Transverse colon (tissue), 4 donors: ENCODE measurements at regions of chr3 and their contacts with region 1.

Region 1: DNA sequence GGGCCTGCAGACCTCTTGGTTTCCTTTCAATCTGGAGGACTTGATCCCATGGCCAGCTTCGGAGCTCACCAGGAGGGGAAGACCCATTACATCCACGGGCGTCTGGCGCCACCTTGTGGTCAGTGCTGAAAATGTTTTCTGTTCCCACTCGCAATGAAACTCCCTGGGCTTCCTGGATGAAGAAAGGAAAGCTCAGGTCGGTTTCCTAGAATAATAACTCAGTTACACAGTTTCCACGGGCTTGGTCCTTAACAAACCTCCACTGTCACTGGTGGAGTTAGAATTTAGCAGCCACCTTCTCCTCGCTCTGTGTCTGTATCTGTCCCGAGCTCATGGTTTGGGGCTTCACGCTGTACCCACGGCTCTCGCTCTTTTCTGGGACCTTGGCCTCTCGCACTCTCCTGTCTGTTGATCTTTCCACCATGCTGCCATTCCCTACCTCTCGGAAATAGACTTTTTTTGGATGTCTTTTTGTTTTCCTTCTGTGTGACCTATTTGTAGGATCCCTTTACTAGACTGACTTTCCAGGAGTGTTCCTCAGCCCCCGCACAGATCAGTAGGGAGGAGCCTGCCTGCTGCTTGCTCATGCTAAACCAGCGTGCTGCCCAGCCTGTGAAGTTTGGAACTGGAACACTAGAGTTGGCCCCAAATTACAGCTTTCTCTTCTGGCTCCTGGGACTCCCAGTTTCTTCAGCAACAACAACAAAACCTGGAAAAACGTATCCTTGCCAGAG is 56.3 kb downstream of the IL20RB start:
- DNase-seq: peak; percentile 94
- H3K4me3 ChIP-seq: peak overlapping the region in 3 of 4 donors; percentile 39 to 68 (median 44)
- H3K27ac ChIP-seq: peak overlapping the region; percentile 61 to 81 (median 70)
- H3K4me1 ChIP-seq: peaks cover 4 to 13% (median 8%) of the 10 kb centered on the region in 4 donors
- H3K27me3 ChIP-seq: no peaks in the 10 kb centered on the region
- CTCF ChIP-seq: peak; percentile 86 to 98 (median 88)
- EP300 ChIP-seq: no peak
- POLR2A ChIP-seq: no peak

Region 2: DNA sequence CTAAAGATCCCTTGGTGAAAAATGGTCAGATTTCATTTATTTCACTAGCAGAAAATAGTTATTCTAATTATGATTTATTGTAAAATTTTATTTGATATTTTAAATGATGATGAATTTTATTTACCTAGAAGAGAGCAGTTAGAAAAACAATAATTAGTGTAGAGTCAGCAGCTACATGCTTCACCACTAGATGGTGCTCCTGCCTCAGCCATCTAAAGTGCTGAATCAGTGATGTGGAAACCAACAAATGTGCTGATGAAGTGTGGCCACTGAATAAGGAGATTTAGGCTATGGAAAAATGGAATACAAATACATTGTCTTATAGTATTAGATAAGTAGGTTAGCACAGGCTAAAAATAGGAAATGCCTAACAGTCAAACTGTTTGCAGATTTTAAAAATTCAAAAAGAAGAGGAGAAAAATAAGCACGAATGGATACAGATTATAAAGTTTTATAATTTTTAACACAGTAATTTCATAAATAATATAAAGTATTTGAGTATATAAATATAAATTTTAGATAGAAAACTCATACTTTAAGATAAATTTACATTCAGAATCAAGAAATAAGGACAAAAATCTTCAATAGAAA is 938.8 kb before region 1 on chr3:
- in situ Hi-C with region 1: loop called in 3 of 4 experiments (anchors 10 to 25 kb)
- intact Hi-C with region 1: no loop called
- DNase-seq: peak; percentile 75
- H3K4me3 ChIP-seq: no peak overlapping the region
- H3K27ac ChIP-seq: no peak overlapping the region
- H3K4me1 ChIP-seq: peaks cover 0 to 5% (median 0%) of the 10 kb centered on the region in 4 donors
- H3K27me3 ChIP-seq: no peaks in the 10 kb centered on the region
- CTCF ChIP-seq: peak; percentile 91 to 95 (median 94)
- EP300 ChIP-seq: no peak
- POLR2A ChIP-seq: no peak

Region 3: GRCh38 chr3:136390574-136390973 is 623.5 kb before region 1 on chr3:
- in situ Hi-C with region 1: loop called (anchors 10 to 25 kb)
- intact Hi-C with region 1: loop called (anchors 5 kb)
- DNase-seq: no peak
- H3K4me3 ChIP-seq: no peak overlapping the region
- H3K27ac ChIP-seq: no peak overlapping the region
- H3K4me1 ChIP-seq: peaks cover 0 to 9% (median 3%) of the 10 kb centered on the region in 4 donors
- H3K27me3 ChIP-seq: no peaks in the 10 kb centered on the region
- CTCF ChIP-seq: no peak
- EP300 ChIP-seq: no peak
- POLR2A ChIP-seq: no peak

Region 4: DNA sequence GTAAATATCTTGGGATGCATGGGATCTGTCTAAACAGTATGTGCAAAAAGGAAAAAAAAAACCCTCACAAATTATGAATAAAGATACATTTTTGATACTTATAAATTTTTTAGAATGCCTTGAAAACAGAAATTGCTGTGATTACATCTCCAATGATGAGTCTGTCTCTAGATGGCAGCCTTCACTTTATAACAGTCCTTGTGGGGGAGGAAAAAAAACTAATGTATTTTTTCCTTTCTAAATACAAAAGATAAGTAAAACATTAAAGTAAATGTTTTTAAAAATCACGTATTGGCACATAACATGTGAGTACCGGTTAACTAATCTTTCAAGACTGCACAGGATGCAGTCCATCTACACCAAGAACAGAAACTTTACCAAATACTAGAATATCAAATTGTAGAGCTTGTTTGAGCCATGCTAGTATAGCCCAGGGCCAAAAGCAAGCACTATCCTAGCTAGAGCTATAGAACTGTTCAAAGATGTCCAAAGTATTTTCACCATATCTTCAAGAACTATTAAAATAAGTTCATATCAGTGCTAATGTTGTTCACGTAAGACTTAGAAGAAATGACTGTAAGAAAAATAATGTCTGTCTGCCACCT is 468.4 kb before region 1 on chr3:
- in situ Hi-C with region 1: loop called in 2 of 4 experiments (anchors 25 kb)
- intact Hi-C with region 1: no loop called
- DNase-seq: no peak
- H3K4me3 ChIP-seq: no peak overlapping the region
- H3K27ac ChIP-seq: no peak overlapping the region
- H3K4me1 ChIP-seq: peaks cover 0 to 6% (median 0%) of the 10 kb centered on the region in 4 donors
- H3K27me3 ChIP-seq: no peaks in the 10 kb centered on the region
- CTCF ChIP-seq: peak in 2 of 5 experiments; percentile 8 to 9
- EP300 ChIP-seq: no peak
- POLR2A ChIP-seq: no peak

Region 5: GRCh38 chr3:136772709-136773108 is 241.4 kb before region 1 on chr3:
- in situ Hi-C with region 1: loop called in 1 of 4 experiments (anchors 5 kb)
- intact Hi-C with region 1: no loop called
- DNase-seq: no peak
- H3K4me3 ChIP-seq: no peak overlapping the region
- H3K27ac ChIP-seq: no peak overlapping the region
- H3K4me1 ChIP-seq: no peaks in the 10 kb centered on the region
- H3K27me3 ChIP-seq: no peaks in the 10 kb centered on the region
- CTCF ChIP-seq: no peak
- EP300 ChIP-seq: no peak
- POLR2A ChIP-seq: no peak